Adrenal gland (tissue), 19 donors: ENCODE measurements at regions of chr5 and their contacts with region 1.

Region 1: DNA sequence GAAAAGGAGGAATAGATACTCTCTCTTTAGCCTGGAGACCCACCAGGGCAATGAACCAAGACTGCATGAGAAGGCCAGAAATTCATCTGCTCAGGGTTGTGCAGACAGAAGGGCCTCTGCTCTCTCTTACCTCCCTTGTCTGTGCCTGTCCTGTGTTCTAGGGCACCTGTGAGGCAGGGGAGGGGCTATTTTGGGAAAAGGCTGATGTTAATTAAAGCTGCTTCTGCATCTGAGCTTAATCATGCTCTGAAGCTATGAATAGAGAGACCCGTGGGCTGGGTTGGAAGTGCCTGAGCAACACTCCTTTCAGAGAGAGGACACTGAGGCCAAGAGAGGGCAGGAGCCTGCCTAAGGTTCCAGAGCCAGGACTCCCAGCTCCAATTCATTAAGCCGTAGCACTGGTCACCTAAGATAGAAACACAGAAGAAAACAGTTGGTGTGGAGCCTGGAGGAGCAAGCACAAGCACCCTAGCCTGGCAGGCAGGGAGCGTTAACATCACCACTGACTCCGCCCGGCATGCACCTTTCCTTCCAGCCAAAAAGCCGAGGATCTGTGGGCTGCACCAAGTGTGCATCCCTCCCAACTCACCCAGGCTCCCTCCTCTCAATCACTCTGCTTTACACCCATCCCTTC is 31.4 kb upstream of the STING1 start:
- DNase-seq: no peak
- H3K4me3 ChIP-seq: no peak overlapping the region
- H3K27ac ChIP-seq: no peak overlapping the region
- H3K4me1 ChIP-seq: peaks cover 4% of the 10 kb centered on the region in 2 donors
- H3K27me3 ChIP-seq: no peaks in the 10 kb centered on the region
- CTCF ChIP-seq: no peak
- POLR2A ChIP-seq: no peak

Region 2: DNA sequence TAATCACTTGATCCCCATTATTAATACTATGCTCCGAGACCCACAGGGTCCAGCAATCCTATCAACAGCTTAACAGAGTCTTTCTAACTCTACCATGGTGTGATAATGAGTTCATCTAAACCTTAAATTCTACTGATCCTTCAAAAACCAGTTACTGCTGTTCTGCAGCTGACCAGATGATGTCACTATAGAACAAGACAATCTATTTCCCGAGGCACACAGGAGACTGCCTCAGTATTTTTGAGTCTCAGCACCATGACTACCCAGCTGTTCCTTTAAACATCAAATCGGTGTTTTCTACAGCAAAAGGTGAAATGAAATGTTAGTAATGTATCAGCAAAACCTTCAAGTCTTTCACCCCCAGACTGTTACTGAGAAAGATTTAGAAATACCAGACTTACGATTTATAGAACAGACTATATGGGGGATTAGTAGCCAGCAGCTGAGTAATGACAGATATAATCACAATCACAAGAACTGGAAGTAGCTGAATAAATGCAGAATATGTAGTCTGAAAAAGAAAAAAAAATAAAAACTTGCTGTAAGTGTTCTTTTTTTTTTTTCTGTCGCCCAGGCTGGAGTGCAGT is 91.6 kb before region 1 on chr5:
- intact Hi-C with region 1: loop called (anchors 5 kb)
- DNase-seq: peak in 6 of 7 donors; percentile 51 to 72 (median 59)
- H3K4me3 ChIP-seq: no peak overlapping the region
- H3K27ac ChIP-seq: no peak overlapping the region
- H3K4me1 ChIP-seq: peaks cover 0 to 5% of the 10 kb centered on the region in 2 donors
- H3K27me3 ChIP-seq: no peaks in the 10 kb centered on the region
- CTCF ChIP-seq: peak; percentile 47 to 91 (median 78)
- POLR2A ChIP-seq: no peak

Region 3: DNA sequence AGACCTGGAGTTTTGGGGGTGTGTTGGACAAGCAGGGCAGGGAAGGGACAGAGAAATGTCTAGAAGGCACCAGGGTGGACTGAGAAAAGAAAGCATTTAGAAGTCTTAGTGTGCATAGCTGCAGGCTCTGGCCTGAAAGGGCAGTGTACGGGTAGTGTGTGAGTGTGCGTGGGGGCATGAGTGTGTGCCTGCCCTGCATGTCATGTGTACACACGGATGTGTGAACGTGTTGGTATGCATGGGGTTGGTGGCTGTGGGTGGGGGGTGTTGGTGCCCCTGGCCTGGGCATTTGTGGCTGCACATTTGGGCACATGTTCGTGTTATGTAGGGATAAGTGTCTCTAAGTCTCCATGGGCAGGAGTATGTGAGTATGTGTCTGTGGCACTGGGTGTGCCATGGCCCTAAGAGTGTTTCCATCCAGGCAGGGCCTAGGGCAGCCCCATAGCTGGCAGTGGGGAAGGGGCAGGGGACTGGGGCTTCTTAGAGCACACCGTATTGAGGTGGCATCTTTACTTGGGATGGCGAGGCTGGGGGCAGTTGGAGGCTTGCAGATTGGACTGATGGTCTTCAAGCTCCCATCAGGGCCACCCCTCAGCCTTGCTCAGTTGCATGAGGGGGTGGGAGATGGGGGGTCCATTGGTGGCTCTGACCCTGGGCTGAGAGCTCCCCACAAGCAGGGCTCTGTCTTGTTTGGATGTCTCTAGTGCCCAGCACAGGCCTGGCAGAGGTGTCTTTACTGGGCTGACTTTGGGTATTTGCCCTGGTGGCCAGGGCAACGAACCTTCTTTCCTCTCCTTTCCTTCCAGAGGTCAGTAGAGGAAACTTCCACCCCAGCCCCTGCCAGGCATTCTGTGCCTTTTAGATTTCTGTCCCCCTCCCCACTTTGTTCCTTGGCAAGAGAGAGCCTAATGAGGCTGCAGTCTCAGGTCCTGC is 296.6 kb after region 1 on chr5:
- intact Hi-C with region 1: no loop called
- DNase-seq: no peak
- H3K4me3 ChIP-seq: no peak overlapping the region
- H3K27ac ChIP-seq: no peak overlapping the region
- H3K4me1 ChIP-seq: no peaks in the 10 kb centered on the region
- H3K27me3 ChIP-seq: no peaks in the 10 kb centered on the region
- CTCF ChIP-seq: no peak
- POLR2A ChIP-seq: no peak

Region 4: DNA sequence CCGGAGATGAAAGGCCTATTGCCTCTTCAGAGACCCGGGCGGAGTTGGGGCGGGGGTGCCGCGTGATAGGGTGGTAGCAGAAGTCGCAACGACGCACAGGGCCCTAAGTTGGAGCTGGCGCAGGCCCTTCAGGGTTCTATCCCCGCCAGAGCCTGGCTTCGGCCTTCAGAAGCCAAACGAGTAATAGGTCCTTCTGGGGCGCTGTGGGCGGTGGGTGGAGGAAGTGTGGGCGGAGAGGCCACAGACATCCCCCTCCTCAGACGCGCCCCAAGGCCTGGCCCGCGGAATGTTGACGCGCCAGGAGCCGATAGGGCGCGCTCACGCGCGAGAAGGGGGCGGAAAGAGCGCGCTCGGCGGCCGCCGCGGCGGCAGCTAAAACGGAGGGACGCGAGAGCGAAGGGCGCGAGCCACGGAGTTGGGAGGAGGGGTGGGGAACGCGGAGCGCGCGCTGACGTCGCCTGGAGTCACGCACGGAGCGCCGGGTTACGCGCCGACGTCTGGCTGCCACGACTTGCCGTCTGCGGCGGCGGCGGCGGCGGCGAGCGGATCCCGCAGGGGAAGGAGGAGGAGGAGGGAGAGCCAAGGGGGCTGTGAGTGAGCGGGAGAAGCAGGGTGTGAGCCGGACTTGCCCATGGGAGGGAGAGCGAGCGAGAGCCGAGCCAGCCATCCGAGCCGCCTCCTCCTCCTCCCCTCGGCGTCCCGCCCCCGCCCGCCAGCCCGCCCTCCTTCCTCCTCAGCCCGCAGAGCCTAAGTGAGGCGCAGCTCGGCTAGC is 593.5 kb after region 1 on chr5:
- intact Hi-C with region 1: no loop called
- DNase-seq: peak; percentile 92 to 97 (median 94)
- H3K4me3 ChIP-seq: peak overlapping the region; percentile 19 to 81 (median 57)
- H3K27ac ChIP-seq: peak overlapping the region; percentile 93 to 99 (median 97)
- H3K4me1 ChIP-seq: peaks cover 11 to 47% of the 10 kb centered on the region in 2 donors
- H3K27me3 ChIP-seq: no peaks in the 10 kb centered on the region
- CTCF ChIP-seq: peak in 4 of 6 experiments; percentile 10 to 35 (median 26)
- POLR2A ChIP-seq: peak; percentile 73 to 88